Activated B cell treated with CpG ODN at 0.5 μM for 24 hours (primary cell): ENCODE measurements at regions of chr3 and their contacts with region 1.

Region 1: DNA sequence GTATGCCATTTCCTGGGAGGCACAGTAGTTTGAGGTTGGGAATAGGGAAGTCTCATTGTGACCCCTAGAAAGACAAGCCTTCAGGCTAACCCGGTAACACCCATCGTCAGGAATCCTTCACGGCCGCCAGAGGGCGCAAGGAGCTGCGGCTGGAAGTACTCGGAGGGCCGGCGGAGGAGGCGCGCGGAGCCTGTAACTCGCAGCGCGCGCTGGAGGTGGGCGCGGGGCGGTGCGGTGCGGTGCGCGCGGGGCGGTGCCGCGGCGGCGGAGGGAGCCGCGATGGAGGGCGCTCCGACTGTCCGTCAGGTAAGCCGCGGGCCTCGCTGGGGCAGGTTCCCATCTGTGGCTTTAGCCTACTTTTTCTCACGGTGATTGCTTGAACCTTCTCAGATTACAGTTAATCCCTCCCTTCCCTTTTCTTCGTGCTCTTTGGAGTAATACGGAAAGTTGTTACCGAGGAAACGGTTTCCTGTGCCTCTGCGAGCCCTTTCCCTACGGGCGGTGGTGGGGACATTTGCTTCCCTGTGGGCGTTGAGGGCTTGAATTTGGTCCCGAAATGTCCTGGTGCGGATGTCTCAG is at the start of gene GRAMD1C:
- DNase-seq: peak; percentile 78
- ATAC-seq: peak; percentile 99
- H3K4me3 Mint-ChIP-seq: peak within 1 kb of the TSS; percentile 90
- H3K27ac Mint-ChIP-seq: peak within 1 kb of the TSS; percentile 59
- H3K4me1 Mint-ChIP-seq: peaks cover 22% of the 10 kb centered on the region
- H3K27me3 Mint-ChIP-seq: no peaks in the 10 kb centered on the region
- CTCF ChIP-seq: peak; percentile 59
- total RNA-seq, gene GRAMD1C: 11.4 and 12.2 TPM in 2 replicates

Region 2: GRCh38 chr3:113736548-113737089 is 102.1 kb before region 1 on chr3:
- CTCF ChIA-PET with region 1: interaction called, 22 read pairs
- POLR2A ChIA-PET with region 1: interaction called, 4 read pairs
- intact Hi-C with region 1: loop called (anchors 1 kb)
- DNase-seq: no peak
- ATAC-seq: peak; percentile 86
- H3K4me3 Mint-ChIP-seq: no peak overlapping the region
- H3K27ac Mint-ChIP-seq: peak overlapping the region; percentile 76
- H3K4me1 Mint-ChIP-seq: peaks cover 40% of the 10 kb centered on the region
- H3K27me3 Mint-ChIP-seq: no peaks in the 10 kb centered on the region
- CTCF ChIP-seq: no peak

Region 3: DNA sequence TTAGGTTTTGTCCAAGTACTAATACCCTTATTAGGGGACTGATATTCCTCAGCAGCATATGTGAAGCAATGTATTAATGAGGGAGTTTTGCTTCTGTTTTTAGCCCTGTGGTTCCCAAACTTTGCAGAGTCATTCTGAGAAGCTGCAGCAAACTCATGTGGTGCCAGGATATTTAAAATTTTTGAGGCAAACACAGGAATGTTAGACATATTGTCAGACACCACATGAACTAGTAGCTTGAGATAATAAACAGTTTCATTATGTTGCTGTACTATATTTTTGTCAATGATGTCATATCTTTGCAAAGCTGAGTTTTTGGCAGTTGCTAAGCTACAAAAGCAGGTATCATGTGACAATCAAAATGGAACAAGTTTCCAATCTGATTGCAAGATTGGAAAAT is 55.3 kb before region 1 on chr3:
- CTCF ChIA-PET with region 1: interaction called, 3 read pairs
- POLR2A ChIA-PET with region 1: no interaction called
- intact Hi-C with region 1: loop called (anchors 5 kb)
- DNase-seq: no peak
- ATAC-seq: peak; percentile 45
- H3K4me3 Mint-ChIP-seq: no peak overlapping the region
- H3K27ac Mint-ChIP-seq: no peak overlapping the region
- H3K4me1 Mint-ChIP-seq: peaks cover 13% of the 10 kb centered on the region
- H3K27me3 Mint-ChIP-seq: no peaks in the 10 kb centered on the region
- CTCF ChIP-seq: no peak

Region 4: GRCh38 chr3:113825090-113825489 is 13.6 kb before region 1 on chr3:
- CTCF ChIA-PET with region 1: interaction called, 32 read pairs
- POLR2A ChIA-PET with region 1: interaction called, 18 read pairs
- intact Hi-C with region 1: loop called (anchors 1 kb)
- DNase-seq: no peak
- ATAC-seq: peak; percentile 90
- H3K4me3 Mint-ChIP-seq: peak overlapping the region; percentile 64
- H3K27ac Mint-ChIP-seq: peak overlapping the region; percentile 71
- H3K4me1 Mint-ChIP-seq: peaks cover 43% of the 10 kb centered on the region
- H3K27me3 Mint-ChIP-seq: no peaks in the 10 kb centered on the region
- CTCF ChIP-seq: no peak

Region 5: DNA sequence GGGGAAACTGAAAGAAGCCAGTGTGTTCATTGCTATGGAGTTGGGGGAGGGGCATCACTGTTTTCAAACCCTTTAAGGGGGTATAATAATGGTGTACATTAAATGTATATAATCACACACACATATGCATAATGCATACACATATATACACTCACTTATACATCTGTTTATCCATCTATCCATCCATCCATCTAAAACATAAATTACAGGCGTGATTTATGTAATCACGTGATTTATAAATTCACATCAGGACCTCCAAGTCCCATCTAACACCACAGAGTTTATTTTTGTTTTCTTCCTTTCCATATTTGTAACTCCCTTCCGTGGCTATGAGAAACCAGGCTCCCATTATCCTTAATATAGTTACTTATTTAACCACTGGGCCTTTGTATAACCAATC is 39.7 kb after region 1 on chr3:
- CTCF ChIA-PET with region 1: no interaction called
- POLR2A ChIA-PET with region 1: no interaction called
- intact Hi-C with region 1: no loop called
- DNase-seq: no peak
- ATAC-seq: no peak
- H3K4me3 Mint-ChIP-seq: no peak overlapping the region
- H3K27ac Mint-ChIP-seq: no peak overlapping the region
- H3K4me1 Mint-ChIP-seq: no peaks in the 10 kb centered on the region
- H3K27me3 Mint-ChIP-seq: no peaks in the 10 kb centered on the region
- CTCF ChIP-seq: no peak

Region 6: GRCh38 chr3:113912552-113913236 is 74.0 kb after region 1 on chr3:
- CTCF ChIA-PET with region 1: interaction called, 34 read pairs
- POLR2A ChIA-PET with region 1: no interaction called
- intact Hi-C with region 1: loop called (anchors 1 kb)
- DNase-seq: no peak
- ATAC-seq: peak; percentile 97
- H3K4me3 Mint-ChIP-seq: peak overlapping the region; percentile 42
- H3K27ac Mint-ChIP-seq: no peak overlapping the region
- H3K4me1 Mint-ChIP-seq: peaks cover 6% of the 10 kb centered on the region
- H3K27me3 Mint-ChIP-seq: no peaks in the 10 kb centered on the region
- CTCF ChIP-seq: no peak

Region 7: DNA sequence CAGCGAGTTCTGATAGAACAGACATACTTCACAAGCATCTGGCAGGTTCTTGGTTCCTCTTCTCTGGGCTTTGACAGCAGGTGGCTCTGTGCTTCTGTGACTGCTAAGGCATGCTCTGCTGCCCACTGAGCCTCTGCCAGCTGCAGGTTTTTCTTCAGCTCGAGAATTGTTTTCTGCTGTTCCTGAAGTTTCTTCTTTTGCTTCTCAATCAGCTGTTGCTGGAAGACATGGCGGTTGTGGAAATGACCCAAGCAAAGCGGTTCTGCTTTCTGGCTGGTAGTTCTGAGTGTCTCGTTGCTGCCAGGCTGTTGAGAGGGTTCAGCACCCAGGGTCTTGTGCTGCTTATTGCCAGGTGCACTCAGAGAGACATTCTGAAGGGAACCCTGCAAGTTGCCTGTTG is 166.8 kb after region 1 on chr3:
- CTCF ChIA-PET with region 1: no interaction called
- POLR2A ChIA-PET with region 1: no interaction called
- intact Hi-C with region 1: loop called (anchors 2 kb)
- DNase-seq: peak; percentile 52
- ATAC-seq: peak; percentile 95
- H3K4me3 Mint-ChIP-seq: peak overlapping the region; percentile 76
- H3K27ac Mint-ChIP-seq: peak overlapping the region; percentile 97
- H3K4me1 Mint-ChIP-seq: peaks cover 61% of the 10 kb centered on the region
- H3K27me3 Mint-ChIP-seq: no peaks in the 10 kb centered on the region
- CTCF ChIP-seq: no peak

Region 8: GRCh38 chr3:114272271-114272670 is 433.6 kb after region 1 on chr3:
- CTCF ChIA-PET with region 1: no interaction called
- POLR2A ChIA-PET with region 1: no interaction called
- intact Hi-C with region 1: no loop called
- DNase-seq: no peak
- ATAC-seq: no peak
- H3K4me3 Mint-ChIP-seq: no peak overlapping the region
- H3K27ac Mint-ChIP-seq: no peak overlapping the region
- H3K4me1 Mint-ChIP-seq: no peaks in the 10 kb centered on the region
- H3K27me3 Mint-ChIP-seq: no peaks in the 10 kb centered on the region
- CTCF ChIP-seq: no peak